ENCODE measurements at regions of chrX and their contacts with region 1.

Region 1: DNA sequence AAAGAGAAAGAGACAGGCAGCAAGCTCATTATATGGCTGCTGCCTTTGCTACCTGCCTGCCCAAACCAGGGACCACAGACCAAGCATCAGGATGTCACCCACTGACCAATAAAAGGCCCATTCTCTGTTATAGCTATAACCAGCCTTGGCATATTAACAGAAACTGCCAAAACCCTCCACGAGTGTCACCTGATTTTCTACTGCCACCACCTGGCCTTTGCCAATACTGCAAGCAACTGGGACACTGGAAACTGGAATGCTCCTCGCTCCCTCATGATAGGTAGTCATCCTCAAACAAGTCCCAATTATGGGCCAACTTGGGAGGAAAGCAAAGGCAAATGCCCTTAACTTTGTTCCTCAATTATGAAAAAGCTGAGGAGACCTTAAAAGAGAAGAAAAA is 76.0 kb downstream of the SPIN4 start:
- DNase-seq: peak; percentile 46
- H3K4me3 Mint-ChIP-seq: no peak overlapping the region
- H3K27ac Mint-ChIP-seq: no peak overlapping the region
- H3K4me1 Mint-ChIP-seq: no peaks in the 10 kb centered on the region
- H3K27me3 Mint-ChIP-seq: no peaks in the 10 kb centered on the region
- CTCF ChIP-seq: peak; percentile 50

Region 2: GRCh38 chrX:63050225-63050624 is 224.9 kb before region 1 on chrX:
- CTCF ChIA-PET with region 1: interaction called, 10 read pairs
- POLR2A ChIA-PET with region 1: no interaction called
- intact Hi-C with region 1: no loop called
- DNase-seq: no peak
- H3K4me3 Mint-ChIP-seq: no peak overlapping the region
- H3K27ac Mint-ChIP-seq: no peak overlapping the region
- H3K4me1 Mint-ChIP-seq: no peaks in the 10 kb centered on the region
- H3K27me3 Mint-ChIP-seq: no peaks in the 10 kb centered on the region
- CTCF ChIP-seq: peak; percentile 12

Region 3: DNA sequence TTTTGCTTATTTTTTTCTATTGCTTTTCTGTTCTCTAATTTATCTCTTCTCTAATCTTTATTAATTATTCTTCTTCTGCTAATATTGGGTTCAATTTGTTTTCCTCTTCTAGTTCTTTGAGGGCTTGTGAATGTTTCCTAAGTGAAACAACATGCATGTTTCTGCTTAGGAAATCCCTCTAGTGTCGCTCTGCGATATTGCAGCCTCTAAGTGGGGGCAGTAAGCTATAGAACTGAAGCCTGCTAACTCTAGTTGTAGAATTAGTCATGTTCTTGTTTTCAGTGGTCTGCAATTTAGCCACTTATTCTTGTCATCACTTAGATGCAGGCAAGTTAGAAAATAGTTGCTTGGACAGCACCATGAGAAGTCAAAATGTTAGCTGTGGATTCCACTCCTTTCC is 146.6 kb before region 1 on chrX:
- CTCF ChIA-PET with region 1: no interaction called
- POLR2A ChIA-PET with region 1: no interaction called
- intact Hi-C with region 1: no loop called
- DNase-seq: peak; percentile 27
- H3K4me3 Mint-ChIP-seq: no peak overlapping the region
- H3K27ac Mint-ChIP-seq: no peak overlapping the region
- H3K4me1 Mint-ChIP-seq: no peaks in the 10 kb centered on the region
- H3K27me3 Mint-ChIP-seq: no peaks in the 10 kb centered on the region
- CTCF ChIP-seq: peak; percentile 49

Region 4: GRCh38 chrX:63250253-63250868 is 24.8 kb before region 1 on chrX:
- CTCF ChIA-PET with region 1: interaction called, 13 read pairs
- POLR2A ChIA-PET with region 1: no interaction called
- intact Hi-C with region 1: no loop called
- DNase-seq: peak; percentile 81
- H3K4me3 Mint-ChIP-seq: no peak overlapping the region
- H3K27ac Mint-ChIP-seq: no peak overlapping the region
- H3K4me1 Mint-ChIP-seq: no peaks in the 10 kb centered on the region
- H3K27me3 Mint-ChIP-seq: no peaks in the 10 kb centered on the region
- CTCF ChIP-seq: peak; percentile 97

Region 5: GRCh38 chrX:63754860-63755582 is 479.9 kb after region 1 on chrX:
- CTCF ChIA-PET with region 1: no interaction called
- POLR2A ChIA-PET with region 1: no interaction called
- intact Hi-C with region 1: no loop called
- DNase-seq: peak; percentile 87
- H3K4me3 Mint-ChIP-seq: peak overlapping the region; percentile 89
- H3K27ac Mint-ChIP-seq: peak overlapping the region; percentile 83
- H3K4me1 Mint-ChIP-seq: peaks cover 22% of the 10 kb centered on the region
- H3K27me3 Mint-ChIP-seq: no peaks in the 10 kb centered on the region
- CTCF ChIP-seq: no peak